H1 (cell line): ENCODE measurements at regions of chr12 and their contacts with region 1.

Region 1: DNA sequence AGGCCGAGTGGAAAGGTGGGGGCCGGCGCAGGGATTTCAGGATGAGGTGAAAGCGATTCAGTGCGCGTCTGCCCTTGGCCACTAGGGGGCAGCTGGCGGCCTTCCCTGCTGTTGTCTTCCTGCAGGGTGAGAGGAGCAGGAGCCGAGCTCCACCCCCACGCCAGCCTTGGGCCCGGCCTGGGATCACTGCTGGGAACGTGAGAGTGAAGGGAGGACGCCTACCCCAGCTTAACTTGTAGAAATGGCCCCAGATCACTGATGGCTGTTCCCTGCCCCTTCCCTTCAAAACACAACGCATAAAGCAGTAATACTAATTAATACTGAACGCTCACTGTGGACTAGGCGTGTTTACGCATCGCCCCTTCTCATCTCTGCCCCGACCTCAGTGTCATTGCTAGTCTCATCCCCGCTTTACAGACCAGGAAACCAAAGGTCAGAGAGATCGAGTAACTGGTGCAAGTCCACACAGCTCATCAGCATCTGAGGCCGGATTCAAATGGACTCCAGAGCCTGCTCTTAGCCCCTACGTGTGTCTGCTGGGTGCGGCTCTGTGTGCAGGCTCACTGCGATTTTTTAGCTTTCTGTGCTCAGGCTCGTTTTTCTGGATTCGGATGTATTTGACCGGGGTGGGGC is 24.3 kb downstream of the MVK start:
- DNase-seq: peak; percentile 72 to 97
- H3K4me3 ChIP-seq: no peak overlapping the region
- H3K27ac ChIP-seq: no peak overlapping the region
- H3K4me1 ChIP-seq: peaks cover 0 to 7% (median 2%) of the 10 kb centered on the region in 4 experiments; a peak in 4 of 7 replicates
- H3K27me3 ChIP-seq: no peaks in the 10 kb centered on the region
- CTCF ChIP-seq: peak; percentile 96 to 98 (median 97)
- EP300 ChIP-seq: no peak
- POLR2A ChIP-seq: peak in 1 of 2 experiments; percentile 46; a peak in 1 of 3 replicates
- RAD21 ChIP-seq: peak; percentile 92 to 96

Region 2: GRCh38 chr12:109518820-109519665 is 78.9 kb before region 1 on chr12:
- CTCF ChIA-PET with region 1: interaction called, 29 read pairs
- POLR2A ChIA-PET with region 1: no interaction called
- DNase-seq: peak in 1 of 2 experiments; percentile 86
- H3K4me3 ChIP-seq: no peak overlapping the region
- H3K27ac ChIP-seq: no peak overlapping the region
- H3K4me1 ChIP-seq: peaks cover 0 to 7% (median 0%) of the 10 kb centered on the region in 4 experiments; a peak in 1 of 7 replicates
- H3K27me3 ChIP-seq: no peaks in the 10 kb centered on the region
- CTCF ChIP-seq: peak; percentile 66 to 88 (median 77)
- EP300 ChIP-seq: no peak
- POLR2A ChIP-seq: no peak
- RAD21 ChIP-seq: peak; percentile 80 to 84

Region 3: GRCh38 chr12:109581856-109582255 is 16.1 kb before region 1 on chr12:
- CTCF ChIA-PET with region 1: interaction called, 68 read pairs
- POLR2A ChIA-PET with region 1: no interaction called
- DNase-seq: no peak
- H3K4me3 ChIP-seq: no peak overlapping the region
- H3K27ac ChIP-seq: no peak overlapping the region
- H3K4me1 ChIP-seq: no peaks in the 10 kb centered on the region
- H3K27me3 ChIP-seq: no peaks in the 10 kb centered on the region
- CTCF ChIP-seq: no peak
- EP300 ChIP-seq: no peak
- POLR2A ChIP-seq: no peak
- RAD21 ChIP-seq: no peak

Region 4: GRCh38 chr12:109713187-109713984 is 115.5 kb after region 1 on chr12 and contains the start of gene FAM222A:
- CTCF ChIA-PET with region 1: interaction called, 30 read pairs
- POLR2A ChIA-PET with region 1: interaction called, 6 read pairs
- DNase-seq: peak; percentile 88 to 94
- H3K4me3 ChIP-seq: peak within 1 kb of the TSS; percentile 36 to 67 (median 44)
- H3K27ac ChIP-seq: no peak within 1 kb of the TSS
- H3K4me1 ChIP-seq: peaks cover 4 to 23% (median 15%) of the 10 kb centered on the region in 4 experiments
- H3K27me3 ChIP-seq: peaks cover 4 to 52% (median 44%) of the 10 kb centered on the region in 4 experiments
- CTCF ChIP-seq: no peak
- EP300 ChIP-seq: peak in 1 of 2 experiments; percentile 52; a peak in 1 of 3 replicates
- POLR2A ChIP-seq: peak in 1 of 2 experiments; percentile 63; a peak in 1 of 3 replicates
- RAD21 ChIP-seq: no peak
- total RNA-seq, gene FAM222A: 1.1 and 1.5 TPM in 2 replicates

Region 5: GRCh38 chr12:109736552-109737108 is 138.7 kb after region 1 on chr12:
- CTCF ChIA-PET with region 1: interaction called, 22 read pairs
- POLR2A ChIA-PET with region 1: no interaction called
- DNase-seq: peak in 1 of 2 experiments; percentile 87
- H3K4me3 ChIP-seq: no peak overlapping the region
- H3K27ac ChIP-seq: no peak overlapping the region
- H3K4me1 ChIP-seq: peaks cover 5 to 11% (median 7%) of the 10 kb centered on the region in 4 experiments; a peak in 6 of 7 replicates
- H3K27me3 ChIP-seq: peaks cover 0 to 16% (median 9%) of the 10 kb centered on the region in 4 experiments; a peak in 4 of 7 replicates
- CTCF ChIP-seq: no peak
- EP300 ChIP-seq: no peak
- POLR2A ChIP-seq: no peak
- RAD21 ChIP-seq: 0 out of 4 replicates have a peak, but pooled peaks of 1 of the 2 experiments have one; percentile 6

Region 6: GRCh38 chr12:109775172-109775881 is 177.4 kb after region 1 on chr12:
- CTCF ChIA-PET with region 1: interaction called, 163 read pairs
- POLR2A ChIA-PET with region 1: interaction called, 3 read pairs
- DNase-seq: peak; percentile 31 to 91
- H3K4me3 ChIP-seq: no peak overlapping the region
- H3K27ac ChIP-seq: no peak overlapping the region
- H3K4me1 ChIP-seq: peaks cover 0 to 10% (median 3%) of the 10 kb centered on the region in 4 experiments; a peak in 2 of 7 replicates
- H3K27me3 ChIP-seq: no peaks in the 10 kb centered on the region
- CTCF ChIP-seq: peak; percentile 87 to 96 (median 91)
- EP300 ChIP-seq: no peak
- POLR2A ChIP-seq: no peak
- RAD21 ChIP-seq: peak; percentile 97